Heart right ventricle (tissue), 16 donors: ENCODE measurements at regions of chr1 and their contacts with region 1.

Region 1: DNA sequence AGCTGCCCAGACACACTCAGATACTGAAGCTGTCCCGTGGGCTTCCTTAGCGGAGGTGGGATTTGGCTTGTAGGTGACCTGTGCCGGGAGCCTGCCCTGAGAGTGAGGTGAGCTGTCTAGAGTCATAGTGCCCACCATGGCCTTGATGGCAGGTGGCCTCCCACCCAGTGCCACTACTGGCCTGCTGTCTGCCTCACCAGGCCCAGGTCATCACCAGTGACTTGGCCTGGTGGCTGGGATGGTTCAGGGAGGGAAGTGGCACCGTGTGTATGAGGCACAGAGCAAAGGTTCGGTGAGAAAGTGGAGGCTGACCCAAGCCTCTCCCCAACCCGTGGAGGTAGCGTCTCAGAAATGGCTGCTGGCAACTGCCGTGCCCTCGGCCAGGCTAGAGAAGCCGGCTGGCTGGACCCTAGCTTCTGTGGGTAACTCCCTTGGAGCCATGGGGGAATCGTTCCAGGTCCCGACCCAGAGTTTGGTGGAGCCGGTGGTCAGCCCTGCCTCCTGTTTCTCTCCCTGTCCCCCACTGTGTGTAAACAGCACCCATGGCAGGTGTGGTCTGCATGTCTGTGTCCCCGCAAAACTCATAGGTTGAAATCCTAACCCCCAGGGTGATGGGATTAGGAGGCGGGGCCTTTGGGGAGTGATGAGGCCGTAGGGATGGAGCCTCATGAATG is 155.4 kb upstream of the C1orf174 start:
- DNase-seq: no peak
- ATAC-seq: no peak
- H3K4me3 ChIP-seq: no peak overlapping the region
- H3K27ac ChIP-seq: no peak overlapping the region
- H3K4me1 ChIP-seq: no peaks in the 10 kb centered on the region
- H3K27me3 ChIP-seq: peaks cover 0 to 19% (median 11%) of the 10 kb centered on the region in 7 donors
- CTCF ChIP-seq: no peak

Region 2: GRCh38 chr1:4794020-4794780 is 738.8 kb after region 1 on chr1:
- intact Hi-C with region 1: loop called in 1 of 10 experiments (anchors 5 kb)
- DNase-seq: no peak
- ATAC-seq: no peak
- H3K4me3 ChIP-seq: no peak overlapping the region
- H3K27ac ChIP-seq: no peak overlapping the region
- H3K4me1 ChIP-seq: peaks cover 0 to 12% (median 0%) of the 10 kb centered on the region in 9 donors
- H3K27me3 ChIP-seq: peaks cover 0 to 27% (median 3%) of the 10 kb centered on the region in 7 donors
- CTCF ChIP-seq: no peak

Region 3: DNA sequence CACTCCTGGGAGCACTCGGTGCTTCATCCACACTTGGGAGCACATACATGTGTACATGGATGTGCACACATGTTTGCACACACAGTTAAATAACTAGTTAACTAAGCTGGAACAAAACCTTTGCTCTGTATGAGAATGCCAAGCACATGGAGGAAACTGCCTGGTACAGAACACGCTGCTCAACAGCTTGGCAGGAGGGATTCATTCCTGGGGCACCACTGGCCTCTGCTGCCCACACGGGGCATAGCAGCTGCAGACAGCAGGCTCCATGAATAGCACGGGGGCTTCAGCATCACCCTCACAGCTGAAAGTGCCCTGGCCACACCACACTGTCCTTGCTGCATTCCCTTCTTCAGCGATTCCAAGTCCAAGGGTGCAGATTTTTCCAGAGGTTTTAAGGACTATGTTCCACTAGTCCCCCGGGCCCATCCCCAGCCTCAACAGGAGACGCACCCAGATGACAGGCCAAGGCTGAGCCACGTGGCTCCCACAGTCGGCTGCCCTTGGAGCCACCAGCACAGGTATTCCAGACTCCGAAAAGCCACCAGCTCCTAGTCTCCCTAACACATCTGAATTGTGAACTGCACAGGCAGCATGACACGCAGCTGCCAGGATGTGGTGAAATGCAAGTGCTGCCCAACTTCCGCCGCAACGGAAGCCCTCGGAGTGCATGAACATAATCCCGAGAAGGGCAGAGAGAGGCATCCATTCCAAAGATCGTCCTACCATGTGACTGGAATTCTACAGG is 1919.9 kb after region 1 on chr1:
- intact Hi-C with region 1: loop called in 1 of 10 experiments (anchors 5 kb)
- DNase-seq: no peak
- ATAC-seq: peak; percentile 64 to 93 (median 84)
- H3K4me3 ChIP-seq: no peak overlapping the region
- H3K27ac ChIP-seq: no peak overlapping the region
- H3K4me1 ChIP-seq: peaks cover 0 to 3% (median 0%) of the 10 kb centered on the region in 9 donors
- H3K27me3 ChIP-seq: no peaks in the 10 kb centered on the region
- CTCF ChIP-seq: peak; percentile 35 to 74 (median 67)